Calu3 (cell line): ENCODE measurements at regions of chr6 and their contacts with region 1.

Region 1: GRCh38 chr6:75934643-75935472 is 137.6 kb downstream of the IMPG1 start:
- DNase-seq: peak; percentile 53
- H3K4me3 Mint-ChIP-seq: peak overlapping the region; percentile 1
- H3K27ac Mint-ChIP-seq: no peak overlapping the region
- H3K4me1 Mint-ChIP-seq: peaks cover 8% of the 10 kb centered on the region
- H3K27me3 Mint-ChIP-seq: no peaks in the 10 kb centered on the region
- CTCF ChIP-seq: peak; percentile 86

Region 2: DNA sequence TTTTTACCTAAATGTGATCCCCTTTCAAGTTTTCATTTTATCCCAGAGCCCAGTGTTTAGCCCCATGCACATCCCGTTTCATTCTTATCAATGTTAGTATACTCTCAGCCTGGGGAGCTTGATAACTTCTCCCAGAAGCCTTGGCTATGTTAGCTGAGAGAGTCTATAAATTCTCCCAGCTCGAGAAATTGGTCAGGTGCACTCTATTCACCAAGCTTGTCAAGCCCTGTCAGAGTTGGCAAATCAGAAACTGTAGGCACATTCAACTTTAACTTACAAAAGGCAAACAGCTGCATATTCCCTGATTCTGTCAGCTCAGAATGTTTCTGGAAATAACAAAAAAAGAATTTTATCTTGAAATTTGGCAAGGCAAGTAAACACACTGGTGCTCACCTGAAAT is 199.8 kb after region 1 on chr6:
- CTCF ChIA-PET with region 1: no interaction called
- intact Hi-C with region 1: no loop called
- DNase-seq: no peak
- H3K4me3 Mint-ChIP-seq: no peak overlapping the region
- H3K27ac Mint-ChIP-seq: no peak overlapping the region
- H3K4me1 Mint-ChIP-seq: peaks cover 9% of the 10 kb centered on the region
- H3K27me3 Mint-ChIP-seq: no peaks in the 10 kb centered on the region
- CTCF ChIP-seq: no peak

Region 3: GRCh38 chr6:76165471-76166221 is 230.8 kb after region 1 on chr6:
- CTCF ChIA-PET with region 1: no interaction called
- intact Hi-C with region 1: no loop called
- DNase-seq: no peak
- H3K4me3 Mint-ChIP-seq: no peak overlapping the region
- H3K27ac Mint-ChIP-seq: no peak overlapping the region
- H3K4me1 Mint-ChIP-seq: no peaks in the 10 kb centered on the region
- H3K27me3 Mint-ChIP-seq: no peaks in the 10 kb centered on the region
- CTCF ChIP-seq: no peak

Region 4: DNA sequence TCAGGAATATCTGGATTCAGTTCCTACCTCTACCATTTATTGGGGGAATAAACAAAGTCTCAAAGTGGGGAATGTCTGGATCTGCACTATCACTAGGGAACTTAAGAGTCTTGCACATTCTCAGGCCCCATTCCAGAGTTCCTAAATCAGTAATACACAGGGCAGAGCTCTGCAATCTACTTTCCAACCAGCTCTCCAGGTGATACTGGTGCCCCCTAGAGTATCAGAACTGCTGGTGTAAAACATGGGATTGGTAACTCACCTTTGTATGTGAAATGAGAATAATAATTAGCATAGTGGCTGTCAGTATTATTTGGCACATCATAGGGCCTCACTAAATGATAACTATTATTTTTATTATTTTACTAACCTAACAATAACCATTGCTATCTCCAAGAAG is 416.4 kb after region 1 on chr6:
- CTCF ChIA-PET with region 1: interaction called, 5 read pairs
- intact Hi-C with region 1: loop called (anchors 1 kb)
- DNase-seq: peak; percentile 30
- H3K4me3 Mint-ChIP-seq: no peak overlapping the region
- H3K27ac Mint-ChIP-seq: no peak overlapping the region
- H3K4me1 Mint-ChIP-seq: no peaks in the 10 kb centered on the region
- H3K27me3 Mint-ChIP-seq: no peaks in the 10 kb centered on the region
- CTCF ChIP-seq: peak; percentile 31

Region 5: GRCh38 chr6:76682842-76683241 is 748.0 kb after region 1 on chr6:
- CTCF ChIA-PET with region 1: interaction called, 4 read pairs
- intact Hi-C with region 1: loop called (anchors 10 kb)
- DNase-seq: no peak
- H3K4me3 Mint-ChIP-seq: no peak overlapping the region
- H3K27ac Mint-ChIP-seq: no peak overlapping the region
- H3K4me1 Mint-ChIP-seq: no peaks in the 10 kb centered on the region
- H3K27me3 Mint-ChIP-seq: no peaks in the 10 kb centered on the region
- CTCF ChIP-seq: peak; percentile 23

Region 6: GRCh38 chr6:76877238-76877553 is 942.3 kb after region 1 on chr6:
- CTCF ChIA-PET with region 1: no interaction called
- intact Hi-C with region 1: loop called (anchors 5 kb)
- DNase-seq: no peak
- H3K4me3 Mint-ChIP-seq: peak overlapping the region; percentile 72
- H3K27ac Mint-ChIP-seq: no peak overlapping the region
- H3K4me1 Mint-ChIP-seq: no peaks in the 10 kb centered on the region
- H3K27me3 Mint-ChIP-seq: no peaks in the 10 kb centered on the region
- CTCF ChIP-seq: no peak